Common myeloid progenitor, CD34-positive (primary cell): ENCODE measurements at regions of chr16 and their contacts with region 1.

Region 1: DNA sequence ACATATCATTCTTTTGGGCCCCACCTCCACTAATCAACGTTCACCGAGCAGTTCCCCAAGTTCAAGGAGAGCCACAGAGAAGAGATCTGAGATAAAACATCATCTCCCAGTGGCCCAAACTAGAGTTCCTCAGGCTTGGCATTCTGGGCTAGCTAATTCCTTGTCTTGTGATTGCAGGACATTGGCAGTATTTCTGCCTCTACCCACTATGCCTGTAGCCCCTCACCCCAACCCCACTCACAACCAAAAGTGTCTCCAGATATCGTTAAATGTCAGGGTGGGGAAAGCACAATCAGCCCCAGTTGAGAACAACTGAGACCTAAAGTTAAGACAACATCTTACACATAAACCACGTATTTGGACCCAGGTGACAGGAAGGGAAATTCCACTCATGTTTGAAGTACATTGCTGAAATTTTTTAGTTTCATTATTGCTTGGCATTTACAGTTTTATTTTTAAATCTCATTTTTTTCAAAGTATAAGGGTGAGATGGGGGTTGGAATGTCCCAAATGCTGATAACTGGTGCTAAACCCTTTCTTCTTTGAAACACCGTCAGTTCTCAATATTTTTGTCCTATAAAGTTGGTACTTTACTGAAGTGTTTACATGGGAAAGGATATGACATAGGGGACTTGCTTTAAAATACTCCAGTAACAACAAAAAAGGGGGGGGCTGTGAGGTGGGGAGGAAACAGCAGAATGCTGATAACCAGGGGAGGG is 13.6 kb downstream of the ZC3H7A start:
- DNase-seq: peak; percentile 50 to 87 (median 84)
- H3K4me3 ChIP-seq: peak overlapping the region in 5 of 7 experiments; percentile 3 to 72 (median 50)
- H3K27ac ChIP-seq: peak overlapping the region; percentile 67 to 85
- H3K4me1 ChIP-seq: peaks cover 3 to 32% (median 20%) of the 10 kb centered on the region in 4 experiments
- H3K27me3 ChIP-seq: no peaks in the 10 kb centered on the region

Region 2: GRCh38 chr16:11797166-11797956 is 13.9 kb after region 1 on chr16 and contains the start of gene ZC3H7A:
- CTCF ChIA-PET with region 1: interaction called, 59 read pairs
- POLR2A ChIA-PET with region 1: interaction called, 5 read pairs
- DNase-seq: peak; percentile 95 to 97 (median 97)
- H3K4me3 ChIP-seq: peak within 1 kb of the TSS; percentile 72 to 98 (median 93)
- H3K27ac ChIP-seq: peak within 1 kb of the TSS; percentile 92 to 96
- H3K4me1 ChIP-seq: peaks cover 12 to 62% (median 50%) of the 10 kb centered on the region in 4 experiments
- H3K27me3 ChIP-seq: no peaks in the 10 kb centered on the region